Body of pancreas (tissue), 4 donors: ENCODE measurements at regions of chr7 and their contacts with region 1.

Region 1: DNA sequence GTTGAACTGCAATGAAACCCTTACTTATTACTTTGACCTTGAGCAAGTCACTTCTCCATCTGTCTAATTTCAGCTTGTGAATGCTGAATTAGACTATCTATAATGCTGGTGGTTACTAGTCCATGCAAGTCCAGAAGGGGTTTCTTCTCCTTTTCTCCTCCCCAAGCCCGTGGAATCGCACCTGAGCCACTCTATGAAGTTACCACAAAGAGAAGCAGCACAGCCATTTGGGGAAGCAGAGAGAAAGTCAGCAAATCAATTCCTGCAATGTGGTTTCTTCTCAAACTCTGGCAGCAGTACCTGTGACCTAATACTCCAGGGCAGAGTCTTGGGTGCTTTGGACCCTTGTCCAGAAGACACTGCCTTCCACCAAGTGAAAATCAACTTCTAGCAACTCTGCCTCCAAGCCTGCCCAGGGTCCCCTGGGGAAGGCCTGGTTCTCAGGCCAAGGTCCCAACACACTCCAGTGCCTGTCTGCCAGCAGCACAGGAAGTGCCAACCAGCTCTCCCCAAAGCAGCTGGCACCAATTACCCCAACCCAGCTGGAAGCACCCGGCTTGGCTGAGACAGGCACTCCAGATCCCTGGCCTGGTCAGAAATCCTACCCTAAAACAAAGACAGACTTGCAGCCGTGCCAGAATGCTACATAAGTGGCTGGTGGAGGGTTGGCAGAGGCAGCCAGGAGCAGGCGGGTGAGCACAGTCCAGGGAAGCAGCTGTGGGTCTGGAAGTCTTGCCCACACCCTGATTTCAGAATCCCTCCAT is 200.3 kb downstream of the LSM5 start:
- DNase-seq: no peak
- ATAC-seq: no peak
- H3K4me3 ChIP-seq: no peak overlapping the region
- H3K27ac ChIP-seq: no peak overlapping the region
- H3K4me1 ChIP-seq: no peaks in the 10 kb centered on the region
- H3K27me3 ChIP-seq: no peaks in the 10 kb centered on the region
- CTCF ChIP-seq: no peak
- POLR2A ChIP-seq: no peak

Region 2: DNA sequence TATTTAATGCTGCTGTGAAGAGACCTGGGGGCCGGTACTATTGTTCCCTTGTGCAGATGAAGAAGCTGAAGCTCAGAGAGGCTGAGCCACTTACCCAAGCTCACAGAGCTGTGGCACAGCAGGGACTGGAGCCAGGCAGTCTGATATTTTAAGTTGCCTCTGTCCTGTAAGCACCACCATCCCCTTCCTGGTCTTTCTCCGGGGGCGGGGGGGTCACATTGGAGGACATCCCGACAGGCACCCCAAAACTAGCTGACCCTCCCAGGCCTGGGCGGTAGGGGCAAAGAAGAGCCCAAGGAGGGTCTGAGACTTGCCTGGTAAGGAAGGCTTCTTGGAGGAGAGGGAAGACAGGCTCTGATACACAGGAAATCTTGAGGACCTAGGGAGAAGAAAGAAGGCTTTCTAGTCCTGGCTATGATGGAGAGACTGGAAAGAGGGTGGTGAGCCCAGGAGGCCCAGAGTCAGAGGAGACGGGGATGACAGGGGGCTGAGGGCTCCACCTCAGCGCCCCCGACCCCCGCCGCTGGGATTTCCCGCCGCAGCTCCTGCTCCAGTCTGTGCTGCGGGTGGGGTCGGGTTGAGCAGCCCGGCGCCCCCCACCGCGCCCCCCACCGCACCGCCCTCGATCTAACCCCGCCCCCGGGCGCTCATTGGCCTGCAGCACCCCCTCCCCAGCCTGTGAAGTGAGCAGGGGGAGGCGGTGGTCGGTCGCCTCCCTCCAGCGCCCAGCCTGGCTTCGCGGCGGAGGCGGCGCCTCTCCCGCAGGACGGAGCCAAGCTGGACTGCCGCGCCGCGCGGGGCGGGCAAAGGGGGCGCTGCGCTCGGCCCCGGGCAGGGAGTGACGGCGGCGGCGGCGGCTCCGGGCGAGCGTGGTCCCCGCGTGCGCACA is 1238.0 kb before region 1 on chr7 and contains the start of gene ADCYAP1R1:
- intact Hi-C with region 1: loop called (anchors 10 kb)
- DNase-seq: no peak
- ATAC-seq: peak; percentile 25
- H3K4me3 ChIP-seq: no peak within 1 kb of the TSS
- H3K27ac ChIP-seq: no peak within 1 kb of the TSS
- H3K4me1 ChIP-seq: peaks cover 13% of the 10 kb centered on the region
- H3K27me3 ChIP-seq: peaks cover 0 to 21% of the 10 kb centered on the region in 2 donors
- CTCF ChIP-seq: no peak
- POLR2A ChIP-seq: no peak
- total RNA-seq, gene ADCYAP1R1: 1.8 to 8.2 TPM

Region 3: GRCh38 chr7:32871624-32872371 is 582.0 kb after region 1 on chr7:
- intact Hi-C with region 1: no loop called
- DNase-seq: no peak
- ATAC-seq: no peak
- H3K4me3 ChIP-seq: no peak overlapping the region
- H3K27ac ChIP-seq: no peak overlapping the region
- H3K4me1 ChIP-seq: peaks cover 11% of the 10 kb centered on the region
- H3K27me3 ChIP-seq: no peaks in the 10 kb centered on the region
- CTCF ChIP-seq: no peak
- POLR2A ChIP-seq: no peak